ENCODE measurements at regions of chr1 and their contacts with region 1.

Region 1: DNA sequence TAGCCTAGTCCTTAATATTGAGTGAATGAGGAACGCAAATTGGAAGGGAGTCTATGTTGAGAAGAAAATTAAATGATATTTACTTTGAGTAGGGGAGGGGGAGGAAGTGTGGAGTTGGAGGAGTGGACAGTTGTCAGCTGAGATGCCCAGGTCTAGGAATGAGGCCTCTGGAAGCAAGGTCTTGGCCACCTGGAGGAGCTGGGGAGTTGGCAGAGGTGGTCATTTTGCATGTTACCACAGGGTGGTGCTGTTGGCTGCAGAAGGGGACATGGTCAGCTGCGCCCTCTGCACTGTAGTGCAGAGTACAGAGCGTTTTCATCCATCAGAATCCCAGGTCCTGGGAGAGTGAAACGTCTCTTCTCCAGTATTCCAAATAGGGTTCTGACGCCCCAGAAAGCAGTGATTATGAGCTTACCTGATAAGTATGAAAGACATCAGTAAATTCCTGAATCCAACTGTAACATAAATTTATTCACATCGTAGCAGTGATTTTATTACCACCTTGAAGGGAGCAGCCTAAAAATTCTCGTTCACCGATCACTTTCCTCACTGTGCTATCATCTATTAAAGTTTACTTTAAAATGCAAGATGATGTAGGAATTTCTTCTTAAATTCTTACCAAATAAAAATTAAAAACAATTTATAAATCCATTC is 13.8 kb downstream of the PARK7 start:
- DNase-seq: no peak

Region 2: DNA sequence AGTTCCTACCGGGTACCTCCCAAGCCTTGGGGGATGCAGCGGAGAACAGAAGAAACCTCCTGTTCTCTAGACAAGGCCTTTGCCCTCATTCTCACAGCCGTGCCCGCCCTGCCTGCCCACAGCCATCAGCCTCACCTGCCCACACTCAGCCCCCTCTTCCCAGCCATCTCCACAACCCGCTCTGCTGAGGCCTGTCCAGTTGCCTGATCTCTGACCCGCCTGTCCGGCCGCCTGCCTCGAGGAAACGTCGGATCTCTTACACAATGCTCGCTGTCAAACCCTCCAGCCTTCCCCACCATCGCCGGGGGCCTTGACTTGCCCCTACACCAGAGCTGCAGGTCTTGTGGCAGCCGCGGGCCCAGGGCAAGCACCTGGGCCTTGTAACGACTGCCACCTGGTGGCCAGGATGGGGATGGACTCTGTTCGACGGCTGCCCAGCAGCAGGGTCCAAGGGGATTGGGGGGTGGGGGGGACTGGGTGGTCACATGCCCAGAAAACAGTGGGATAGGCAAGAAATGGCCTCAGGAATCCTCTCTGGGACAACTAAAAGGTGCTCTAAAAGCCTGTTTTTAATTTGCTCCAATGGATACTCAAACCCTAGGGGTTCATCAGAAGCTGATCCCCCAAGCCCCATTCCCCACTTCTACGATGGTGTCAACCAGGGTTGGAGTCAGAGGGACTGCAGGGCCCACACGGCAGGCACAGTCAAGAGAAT is 373.6 kb after region 1 on chr1:
- intact Hi-C with region 1: loop called (anchors 2 kb)
- DNase-seq: no peak